ENCODE measurements at regions of chr19 and their contacts with region 1.

Region 1: GRCh38 chr19:16041299-16041990 is 34.9 kb upstream of the TPM4 start:
- DNase-seq: peak; percentile 61
- H3K4me3 ChIP-seq: peak overlapping the region in 1 of 3 experiments; percentile 1
- H3K27ac ChIP-seq: no peak overlapping the region
- H3K4me1 ChIP-seq: no peaks in the 10 kb centered on the region
- H3K27me3 ChIP-seq: no peaks in the 10 kb centered on the region
- CTCF ChIP-seq: peak; percentile 84 to 94

Region 2: DNA sequence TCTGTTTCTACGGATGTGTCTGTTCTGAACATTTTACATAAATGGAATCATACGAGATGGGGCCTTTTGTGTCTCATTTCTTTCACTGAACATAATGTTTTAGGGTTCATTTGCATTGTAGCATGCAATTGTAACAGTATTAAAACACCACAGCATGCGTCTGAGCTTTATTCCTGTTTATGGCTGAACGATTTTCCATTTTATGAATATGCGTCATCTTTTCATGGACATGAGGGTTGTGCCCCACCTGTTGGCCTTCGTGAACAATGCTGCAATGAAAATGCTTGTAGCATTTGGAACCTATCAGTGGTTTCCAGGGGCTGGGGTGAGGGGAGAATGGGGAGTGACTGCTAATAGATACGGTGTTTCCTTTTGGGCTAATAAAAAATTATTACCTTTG is 231.1 kb before region 1 on chr19:
- CTCF ChIA-PET with region 1: interaction called, 27 read pairs
- dilution Hi-C with region 1: no loop called
- in situ Hi-C with region 1: no loop called
- intact Hi-C with region 1: loop called (anchors 2 kb)
- DNase-seq: peak; percentile 38
- H3K4me3 ChIP-seq: no peak overlapping the region
- H3K27ac ChIP-seq: no peak overlapping the region
- H3K4me1 ChIP-seq: peaks cover 13% of the 10 kb centered on the region
- H3K27me3 ChIP-seq: peaks cover 2% of the 10 kb centered on the region
- CTCF ChIP-seq: peak in 1 of 2 donors; percentile 62

Region 3: DNA sequence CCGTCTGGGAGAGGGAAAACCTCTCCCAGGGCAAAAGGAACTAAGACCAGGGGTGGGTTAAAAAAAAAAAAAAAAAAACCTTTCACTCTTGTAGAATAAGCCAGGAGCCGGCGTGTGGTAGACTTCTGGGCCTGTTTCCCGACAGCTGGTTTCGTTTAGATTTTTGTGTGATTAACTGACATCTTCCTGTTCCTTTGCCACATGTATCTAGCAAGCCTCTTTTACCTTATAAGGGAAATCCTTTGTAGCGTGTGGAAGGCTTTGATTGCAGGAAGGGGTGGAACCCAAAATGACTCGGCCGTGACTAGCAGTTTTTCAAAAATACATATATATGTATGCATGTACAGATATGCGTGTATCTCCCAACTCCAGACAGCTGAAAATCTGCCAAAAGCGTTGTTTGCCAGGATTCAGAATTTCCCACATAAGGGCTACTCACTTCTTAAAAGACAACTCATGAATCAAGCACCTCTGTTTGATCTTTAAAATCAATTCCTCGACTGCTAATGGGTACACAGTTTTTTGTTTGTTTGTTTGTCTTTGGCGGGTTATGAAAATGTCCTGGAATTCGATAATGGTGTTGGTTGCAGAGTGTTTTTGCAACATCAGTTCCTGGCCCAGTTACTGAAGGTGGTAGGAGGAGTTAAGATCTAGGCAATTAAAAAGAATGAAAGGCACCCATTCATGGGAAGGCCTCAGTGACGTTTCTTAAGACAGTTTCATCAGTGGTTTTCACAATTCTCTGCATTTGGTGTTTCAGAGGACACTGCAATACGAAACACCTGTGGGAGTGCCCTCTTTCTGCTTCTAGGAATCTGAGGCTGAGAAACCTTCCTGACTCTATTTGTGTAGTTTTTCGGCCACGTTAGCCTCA is 37.6 kb after region 1 on chr19:
- CTCF ChIA-PET with region 1: no interaction called
- dilution Hi-C with region 1: no loop called
- in situ Hi-C with region 1: no loop called
- intact Hi-C with region 1: loop called (anchors 1 kb)
- DNase-seq: peak; percentile 94
- H3K4me3 ChIP-seq: peak overlapping the region; percentile 6 to 79 (median 41)
- H3K27ac ChIP-seq: peak overlapping the region; percentile 99
- H3K4me1 ChIP-seq: peaks cover 30% of the 10 kb centered on the region
- H3K27me3 ChIP-seq: no peaks in the 10 kb centered on the region
- CTCF ChIP-seq: no peak

Region 4: GRCh38 chr19:16185123-16185767 is 143.8 kb after region 1 on chr19 and contains the start of gene FAM32A:
- CTCF ChIA-PET with region 1: interaction called, 8 read pairs
- dilution Hi-C with region 1: no loop called
- in situ Hi-C with region 1: loop called (anchors 5 to 10 kb)
- intact Hi-C with region 1: loop called (anchors 1 kb)
- DNase-seq: peak; percentile 99
- H3K4me3 ChIP-seq: peak within 1 kb of the TSS; percentile 64 to 91 (median 91)
- H3K27ac ChIP-seq: peak within 1 kb of the TSS; percentile 67
- H3K4me1 ChIP-seq: no peaks in the 10 kb centered on the region
- H3K27me3 ChIP-seq: no peaks in the 10 kb centered on the region
- CTCF ChIP-seq: peak in 1 of 2 donors; percentile 18
- total RNA-seq, gene FAM32A: 57.3 to 59.5 TPM

Region 5: GRCh38 chr19:16233836-16234551 is 192.5 kb after region 1 on chr19:
- CTCF ChIA-PET with region 1: no interaction called
- dilution Hi-C with region 1: no loop called
- in situ Hi-C with region 1: no loop called
- intact Hi-C with region 1: no loop called
- DNase-seq: no peak
- H3K4me3 ChIP-seq: no peak overlapping the region
- H3K27ac ChIP-seq: no peak overlapping the region
- H3K4me1 ChIP-seq: no peaks in the 10 kb centered on the region
- H3K27me3 ChIP-seq: no peaks in the 10 kb centered on the region
- CTCF ChIP-seq: no peak

Region 6: DNA sequence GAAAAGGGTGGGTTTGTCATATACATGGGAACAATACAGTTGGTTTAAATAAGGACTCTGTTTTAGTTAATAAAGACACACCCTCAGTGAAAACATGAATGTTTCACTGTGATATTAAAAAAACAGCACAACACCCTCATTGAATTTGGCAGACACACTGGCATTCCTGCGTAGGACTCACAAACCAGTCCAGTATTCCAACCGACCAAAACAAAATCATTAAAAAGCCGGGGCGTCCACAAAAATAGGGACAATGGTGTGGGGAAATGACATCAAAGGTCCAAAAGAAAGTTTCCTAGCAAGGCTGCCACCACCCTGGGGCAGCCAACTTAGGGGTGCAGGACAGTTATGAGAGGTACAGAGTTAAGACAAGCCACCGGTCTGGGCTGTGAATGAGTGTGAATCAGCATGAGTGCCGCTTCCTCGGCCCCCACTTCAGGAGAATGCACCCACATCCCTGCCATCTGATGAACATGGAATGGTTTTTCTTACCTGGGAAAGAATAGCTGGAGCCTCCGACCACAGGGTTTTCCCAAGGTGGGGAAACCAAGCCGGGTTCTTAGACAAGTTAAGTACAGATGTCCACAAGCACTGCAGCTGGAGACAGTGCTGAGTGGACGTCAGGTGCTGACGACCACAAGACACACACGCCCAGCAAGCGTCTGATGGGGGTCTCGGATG is 356.5 kb after region 1 on chr19:
- CTCF ChIA-PET with region 1: no interaction called
- dilution Hi-C with region 1: loop called (anchors 5 kb)
- in situ Hi-C with region 1: loop called in 1 of 2 experiments (anchors 25 kb)
- intact Hi-C with region 1: no loop called
- DNase-seq: peak; percentile 30
- H3K4me3 ChIP-seq: no peak overlapping the region
- H3K27ac ChIP-seq: no peak overlapping the region
- H3K4me1 ChIP-seq: peaks cover 13% of the 10 kb centered on the region
- H3K27me3 ChIP-seq: no peaks in the 10 kb centered on the region
- CTCF ChIP-seq: no peak

Measured in mammary epithelial cell (primary cell).